Left cardiac atrium (tissue), 4 donors: ENCODE measurements at regions of chr11 and their contacts with region 1.

Region 1: GRCh38 chr11:125874556-125875124 is 12.8 kb upstream of the HYLS1 start:
- DNase-seq: peak; percentile 43
- ATAC-seq: peak; percentile 94 to 97

Region 2: GRCh38 chr11:124961972-124962609 is 912.5 kb before region 1 on chr11:
- intact Hi-C with region 1: loop called (anchors 10 kb)
- DNase-seq: no peak
- ATAC-seq: peak; percentile 87 to 89

Region 3: DNA sequence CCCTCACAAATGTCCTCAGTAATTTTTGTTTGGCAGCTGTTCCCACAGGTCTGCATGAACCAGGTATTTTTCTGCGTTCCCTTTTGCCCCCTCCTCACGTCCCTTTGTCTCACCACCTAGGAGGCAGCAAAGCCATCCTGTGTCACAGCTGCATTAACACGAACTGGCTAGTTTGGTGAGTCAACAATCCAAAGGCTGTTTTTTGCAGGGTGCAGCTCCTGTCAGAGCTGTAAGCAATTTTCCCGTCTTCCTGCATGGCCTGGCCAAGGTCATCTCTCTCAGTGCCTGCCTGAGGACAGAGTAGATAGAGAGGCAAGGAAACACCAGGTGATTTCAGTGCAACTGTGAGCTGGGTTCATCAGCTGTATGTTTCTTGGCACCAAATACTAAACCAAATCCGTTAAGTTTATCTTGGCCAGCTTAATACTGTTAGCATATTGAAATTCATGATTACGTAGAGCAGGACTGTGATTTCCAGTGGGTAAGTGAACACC is 50.7 kb after region 1 on chr11:
- intact Hi-C with region 1: no loop called
- DNase-seq: no peak
- ATAC-seq: peak in 1 of 2 donors; percentile 45